ENCODE measurements at regions of chr18 and their contacts with region 1.

Region 1: GRCh38 chr18:67217551-67218166 is 298.9 kb downstream of the DSEL start:
- DNase-seq: no peak
- H3K4me3 ChIP-seq: no peak overlapping the region
- H3K27ac ChIP-seq: no peak overlapping the region
- H3K4me1 ChIP-seq: peaks cover 0 to 6% (median 0%) of the 10 kb centered on the region in 6 donors
- H3K27me3 ChIP-seq: no peaks in the 10 kb centered on the region
- CTCF ChIP-seq: peak; percentile 57 to 83 (median 76)
- POLR2A ChIP-seq: no peak

Region 2: GRCh38 chr18:67151366-67151765 is 66.3 kb before region 1 on chr18:
- intact Hi-C with region 1: no loop called
- DNase-seq: no peak
- H3K4me3 ChIP-seq: no peak overlapping the region
- H3K27ac ChIP-seq: no peak overlapping the region
- H3K4me1 ChIP-seq: no peaks in the 10 kb centered on the region
- H3K27me3 ChIP-seq: no peaks in the 10 kb centered on the region
- CTCF ChIP-seq: no peak
- POLR2A ChIP-seq: no peak

Region 3: GRCh38 chr18:68660354-68661183 is 1442.9 kb after region 1 on chr18:
- intact Hi-C with region 1: loop called (anchors 5 kb)
- DNase-seq: no peak
- H3K4me3 ChIP-seq: no peak overlapping the region
- H3K27ac ChIP-seq: no peak overlapping the region
- H3K4me1 ChIP-seq: no peaks in the 10 kb centered on the region
- H3K27me3 ChIP-seq: no peaks in the 10 kb centered on the region
- CTCF ChIP-seq: peak in 8 of 11 experiments; percentile 14 to 53 (median 39)
- POLR2A ChIP-seq: no peak